Caco-2 (cell line): ENCODE measurements at regions of chr6 and their contacts with region 1.

Region 1: GRCh38 chr6:47000842-47001241 is 41.3 kb downstream of the ADGRF1 start:
- DNase-seq: peak; percentile 21 to 35
- H3K4me3 ChIP-seq: no peak overlapping the region
- H3K4me3 Mint-ChIP-seq: no peak overlapping the region
- H3K27ac Mint-ChIP-seq: no peak overlapping the region
- H3K4me1 ChIP-seq: peaks cover 31% of the 10 kb centered on the region
- H3K4me1 Mint-ChIP-seq: peaks cover 27% of the 10 kb centered on the region
- H3K27me3 ChIP-seq: no peaks in the 10 kb centered on the region
- H3K27me3 Mint-ChIP-seq: no peaks in the 10 kb centered on the region
- CTCF ChIP-seq: no peak

Region 2: GRCh38 chr6:46407776-46408530 is 592.9 kb before region 1 on chr6:
- CTCF ChIA-PET with region 1: no interaction called
- POLR2A ChIA-PET with region 1: no interaction called
- intact Hi-C with region 1: no loop called
- DNase-seq: no peak
- H3K4me3 ChIP-seq: no peak overlapping the region
- H3K4me3 Mint-ChIP-seq: no peak overlapping the region
- H3K27ac Mint-ChIP-seq: no peak overlapping the region
- H3K4me1 ChIP-seq: no peaks in the 10 kb centered on the region
- H3K4me1 Mint-ChIP-seq: no peaks in the 10 kb centered on the region
- H3K27me3 ChIP-seq: no peaks in the 10 kb centered on the region
- H3K27me3 Mint-ChIP-seq: peaks cover 3% of the 10 kb centered on the region
- CTCF ChIP-seq: no peak

Region 3: DNA sequence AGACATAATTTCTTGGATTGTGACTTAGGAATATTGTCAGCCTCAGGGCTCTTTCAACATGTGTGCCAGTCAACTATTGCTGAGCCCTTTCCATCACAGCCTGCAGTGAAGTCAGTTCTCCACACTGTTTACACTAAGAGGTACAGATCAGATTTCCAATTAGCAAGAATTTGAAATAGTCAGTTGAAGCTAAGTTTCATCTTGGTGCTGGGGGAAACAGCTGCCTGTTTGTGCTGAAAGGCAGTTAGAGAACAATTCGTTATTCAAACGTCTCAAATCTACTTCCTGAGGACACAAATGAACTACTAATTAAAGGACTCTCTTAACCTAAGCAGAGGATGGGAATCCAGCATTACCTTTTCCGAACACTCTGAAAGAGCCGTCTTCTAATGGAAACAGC is 15.4 kb after region 1 on chr6:
- CTCF ChIA-PET with region 1: no interaction called
- POLR2A ChIA-PET with region 1: no interaction called
- intact Hi-C with region 1: no loop called
- DNase-seq: no peak
- H3K4me3 ChIP-seq: no peak overlapping the region
- H3K4me3 Mint-ChIP-seq: no peak overlapping the region
- H3K27ac Mint-ChIP-seq: no peak overlapping the region
- H3K4me1 ChIP-seq: peaks cover 10% of the 10 kb centered on the region; the same call in 1 of the 2 replicates
- H3K4me1 Mint-ChIP-seq: peaks cover 9% of the 10 kb centered on the region
- H3K27me3 ChIP-seq: no peaks in the 10 kb centered on the region
- H3K27me3 Mint-ChIP-seq: no peaks in the 10 kb centered on the region
- CTCF ChIP-seq: no peak

Region 4: DNA sequence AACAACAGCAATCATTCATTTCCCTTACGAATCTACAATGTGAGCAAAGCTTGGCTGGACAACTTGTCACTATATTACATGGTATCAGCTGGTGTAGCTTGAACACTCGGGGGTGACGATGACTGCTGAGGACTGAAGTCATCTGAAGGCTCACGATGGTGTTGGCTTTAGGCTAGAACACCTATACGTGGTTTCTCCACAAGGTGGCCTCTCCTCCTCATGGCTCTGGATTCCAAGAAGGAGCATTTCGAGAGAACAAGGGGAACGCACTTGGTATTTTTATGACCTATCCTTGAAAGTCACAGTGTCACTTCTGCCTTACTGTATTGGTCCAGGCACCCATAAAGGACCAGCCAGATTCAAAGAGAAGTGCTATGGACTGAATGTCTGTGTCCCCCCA is 78.8 kb after region 1 on chr6:
- CTCF ChIA-PET with region 1: no interaction called
- POLR2A ChIA-PET with region 1: interaction called, 12 read pairs
- intact Hi-C with region 1: no loop called
- DNase-seq: no peak
- H3K4me3 ChIP-seq: no peak overlapping the region
- H3K4me3 Mint-ChIP-seq: no peak overlapping the region
- H3K27ac Mint-ChIP-seq: no peak overlapping the region
- H3K4me1 ChIP-seq: 0 out of 2 replicates have a peak, but pooled peaks cover 4% of the 10 kb centered on the region
- H3K4me1 Mint-ChIP-seq: peaks cover 6% of the 10 kb centered on the region
- H3K27me3 ChIP-seq: no peaks in the 10 kb centered on the region
- H3K27me3 Mint-ChIP-seq: no peaks in the 10 kb centered on the region
- CTCF ChIP-seq: no peak